ENCODE measurements at regions of chr2 and their contacts with region 1.

Region 1: DNA sequence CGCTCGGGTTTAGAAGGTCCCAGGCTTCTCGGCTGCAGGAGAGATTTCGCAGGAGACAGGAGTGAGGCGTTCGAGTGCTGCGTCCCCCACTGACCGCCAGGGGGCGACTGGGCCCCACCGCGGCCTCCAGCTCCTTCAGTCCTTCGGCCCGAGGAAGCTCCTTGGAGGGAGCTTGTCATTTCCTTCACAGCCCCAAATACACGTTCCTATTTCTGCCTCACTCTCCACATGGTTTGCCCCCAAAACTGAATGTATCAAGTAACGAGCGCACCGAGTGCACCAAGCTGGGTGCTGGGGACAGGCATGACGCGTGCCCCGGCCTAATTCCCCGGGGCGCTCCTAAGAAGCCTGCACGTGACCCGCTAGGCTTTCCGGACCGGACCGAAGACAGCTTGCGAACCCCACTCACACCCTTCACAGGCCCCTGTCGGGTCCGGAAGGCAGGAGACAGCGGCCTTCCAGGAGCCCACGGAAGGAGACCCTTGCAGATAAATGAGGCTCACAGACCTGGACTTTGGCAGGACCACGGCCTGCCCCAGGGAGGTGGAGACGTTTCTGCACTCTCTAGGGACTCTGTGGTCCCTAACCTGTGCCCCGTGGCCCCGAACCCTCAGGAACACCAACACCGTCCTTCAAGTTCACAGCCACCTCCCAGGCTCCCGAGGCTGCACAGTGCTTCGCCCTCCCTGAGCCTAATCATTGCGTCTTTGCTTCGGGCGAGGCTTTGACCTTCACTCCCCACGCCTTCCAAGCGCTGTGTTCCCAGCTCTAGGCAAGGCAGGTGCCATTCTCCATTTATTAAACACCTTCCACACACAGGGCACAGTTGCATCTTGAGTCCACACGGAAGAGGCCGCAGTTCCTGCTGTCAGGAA is 13.0 kb upstream of the FAHD2A start:
- DNase-seq: peak in 6 of 7 donors; percentile 34 to 75 (median 59)
- H3K4me3 ChIP-seq: no peak overlapping the region
- H3K27ac ChIP-seq: no peak overlapping the region
- H3K4me1 ChIP-seq: no peaks in the 10 kb centered on the region
- H3K27me3 ChIP-seq: no peaks in the 10 kb centered on the region
- CTCF ChIP-seq: peak; percentile 54 to 81 (median 76)
- POLR2A ChIP-seq: no peak

Region 2: GRCh38 chr2:95165129-95166064 is 224.1 kb before region 1 on chr2 and contains the start of gene ZNF2:
- intact Hi-C with region 1: no loop called
- DNase-seq: peak; percentile 98 to 99 (median 99)
- H3K4me3 ChIP-seq: peak within 1 kb of the TSS; percentile 50 to 96 (median 66)
- H3K27ac ChIP-seq: peak within 1 kb of the TSS; percentile 81 to 96 (median 94)
- H3K4me1 ChIP-seq: peaks cover 12 to 17% of the 10 kb centered on the region in 2 donors
- H3K27me3 ChIP-seq: no peaks in the 10 kb centered on the region
- CTCF ChIP-seq: no peak
- POLR2A ChIP-seq: peak; percentile 54 to 69
- total RNA-seq, gene ZNF2: 1.8 to 9.3 (median 6.7) TPM

Region 3: GRCh38 chr2:95402370-95403203 is 13.1 kb after region 1 on chr2 and contains the start of gene FAHD2A:
- intact Hi-C with region 1: no loop called
- DNase-seq: peak; percentile 96 to 98 (median 97)
- H3K4me3 ChIP-seq: peak within 1 kb of the TSS; percentile 88 to 99 (median 95)
- H3K27ac ChIP-seq: peak within 1 kb of the TSS in 4 of 5 donors; percentile 81 to 93 (median 84)
- H3K4me1 ChIP-seq: peaks cover 13 to 15% of the 10 kb centered on the region in 2 donors
- H3K27me3 ChIP-seq: no peaks in the 10 kb centered on the region
- CTCF ChIP-seq: no peak
- POLR2A ChIP-seq: peak in 1 of 2 donors; percentile 84
- total RNA-seq, gene FAHD2A: 12.9 to 63.1 (median 28.8) TPM

Region 4: DNA sequence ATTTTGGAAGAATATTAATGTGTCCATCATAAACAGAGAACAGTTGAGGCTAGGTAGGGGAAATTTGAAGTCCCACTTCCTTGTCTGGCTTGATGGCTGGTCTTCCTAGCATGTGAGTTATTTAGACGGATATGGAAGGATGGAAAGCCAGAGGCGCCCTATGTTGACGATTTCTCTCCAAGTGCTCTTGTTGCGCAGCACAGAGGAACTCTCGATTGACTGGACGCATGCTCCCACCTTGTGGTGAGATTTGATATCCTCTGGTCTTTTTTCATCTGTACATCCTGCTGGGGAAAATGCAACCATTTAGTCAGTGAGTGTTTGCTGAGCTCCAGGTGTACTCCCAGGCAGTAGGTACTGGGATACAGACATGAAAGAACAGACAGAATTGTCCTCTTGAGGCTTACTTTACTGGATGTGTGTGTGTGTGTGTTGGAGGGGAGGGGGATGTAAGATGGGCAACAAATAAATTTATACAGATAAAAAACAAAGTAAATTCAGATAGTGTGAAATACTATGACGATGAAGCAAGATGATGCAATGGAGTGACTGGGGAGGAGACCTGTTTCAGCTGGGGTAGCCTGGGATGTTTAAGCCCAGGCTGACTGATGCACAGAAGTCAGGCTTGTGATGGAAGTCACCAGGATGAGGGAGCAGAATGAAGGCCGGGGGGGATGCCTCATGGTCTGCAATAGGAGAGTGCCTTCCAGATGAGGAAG is 339.6 kb after region 1 on chr2:
- intact Hi-C with region 1: loop called in 1 of 2 experiments (anchors 5 kb)
- DNase-seq: peak; percentile 72 to 90 (median 81)
- H3K4me3 ChIP-seq: no peak overlapping the region
- H3K27ac ChIP-seq: no peak overlapping the region
- H3K4me1 ChIP-seq: no peaks in the 10 kb centered on the region
- H3K27me3 ChIP-seq: no peaks in the 10 kb centered on the region
- CTCF ChIP-seq: peak; percentile 46 to 88 (median 82)
- POLR2A ChIP-seq: no peak

Measured in adrenal gland (tissue), 19 donors.